ENCODE measurements at regions of chr6 and their contacts with region 1.

Region 1: GRCh38 chr6:49531774-49532569 is 18.5 kb upstream of the C6orf141 start:
- DNase-seq: peak; percentile 72
- H3K4me3 Mint-ChIP-seq: peak overlapping the region; percentile 31
- H3K27ac Mint-ChIP-seq: no peak overlapping the region
- H3K4me1 Mint-ChIP-seq: peaks cover 6% of the 10 kb centered on the region
- H3K27me3 Mint-ChIP-seq: no peaks in the 10 kb centered on the region
- CTCF ChIP-seq: peak; percentile 90

Region 2: DNA sequence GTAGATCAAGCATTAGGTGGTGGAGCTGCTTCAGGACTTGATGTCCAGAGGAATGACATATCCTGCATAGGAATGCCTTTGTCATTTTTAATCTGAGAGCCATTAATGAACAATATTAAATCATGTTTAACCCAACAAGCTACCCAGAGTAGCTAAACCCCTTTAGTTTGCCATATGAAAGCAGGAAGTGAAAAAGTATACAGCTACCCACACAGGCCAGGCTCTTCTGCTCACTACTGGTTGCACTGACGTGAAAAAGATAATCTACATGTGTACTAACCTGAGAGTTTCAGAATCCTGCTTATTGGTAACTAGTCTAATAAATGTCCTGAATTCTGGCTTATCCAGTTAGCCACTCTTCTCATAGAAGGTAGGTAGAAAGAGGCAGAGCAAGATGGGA is 12.3 kb before region 1 on chr6:
- CTCF ChIA-PET with region 1: interaction called, 18 read pairs
- POLR2A ChIA-PET with region 1: no interaction called
- intact Hi-C with region 1: no loop called
- DNase-seq: no peak
- H3K4me3 Mint-ChIP-seq: no peak overlapping the region
- H3K27ac Mint-ChIP-seq: no peak overlapping the region
- H3K4me1 Mint-ChIP-seq: no peaks in the 10 kb centered on the region
- H3K27me3 Mint-ChIP-seq: no peaks in the 10 kb centered on the region
- CTCF ChIP-seq: no peak

Region 3: DNA sequence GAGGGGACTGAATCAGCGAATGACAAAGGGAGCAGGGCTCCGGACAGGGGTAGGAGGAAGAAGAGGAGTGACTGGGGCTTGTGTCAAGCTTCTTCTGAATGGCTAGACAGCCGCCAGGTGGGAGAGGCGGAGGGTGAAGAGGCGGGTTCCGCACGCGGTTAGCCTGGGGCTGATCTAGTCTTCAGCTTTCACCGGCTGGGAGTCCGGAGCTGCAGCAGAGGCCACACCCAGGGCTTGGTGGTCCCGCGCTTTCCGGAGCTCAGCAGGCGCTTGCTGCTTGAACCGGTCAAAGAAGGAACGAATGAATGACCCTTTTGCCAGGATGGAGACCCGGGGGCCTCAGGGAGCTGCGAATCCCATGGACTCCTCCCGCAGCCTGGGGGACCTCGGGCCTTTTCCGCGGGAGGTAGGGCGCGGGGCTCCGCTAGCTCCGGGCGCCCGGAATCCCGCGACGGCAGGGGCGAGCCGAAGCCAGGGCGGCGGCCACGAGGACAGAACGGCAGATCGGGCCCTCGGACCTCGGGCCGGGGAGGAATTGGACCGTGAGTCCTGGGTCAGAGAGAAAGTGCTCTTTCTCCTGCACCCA is 18.6 kb after region 1 on chr6 and contains the start of gene C6orf141:
- CTCF ChIA-PET with region 1: interaction called, 34 read pairs
- POLR2A ChIA-PET with region 1: interaction called, 23 read pairs
- intact Hi-C with region 1: loop called (anchors 2 kb)
- DNase-seq: peak; percentile 82
- H3K4me3 Mint-ChIP-seq: peak within 1 kb of the TSS; percentile 90
- H3K27ac Mint-ChIP-seq: peak within 1 kb of the TSS; percentile 77
- H3K4me1 Mint-ChIP-seq: peaks cover 25% of the 10 kb centered on the region
- H3K27me3 Mint-ChIP-seq: no peaks in the 10 kb centered on the region
- CTCF ChIP-seq: no peak
- total RNA-seq, gene C6orf141: 29.9 and 37.0 TPM in 2 replicates

Region 4: DNA sequence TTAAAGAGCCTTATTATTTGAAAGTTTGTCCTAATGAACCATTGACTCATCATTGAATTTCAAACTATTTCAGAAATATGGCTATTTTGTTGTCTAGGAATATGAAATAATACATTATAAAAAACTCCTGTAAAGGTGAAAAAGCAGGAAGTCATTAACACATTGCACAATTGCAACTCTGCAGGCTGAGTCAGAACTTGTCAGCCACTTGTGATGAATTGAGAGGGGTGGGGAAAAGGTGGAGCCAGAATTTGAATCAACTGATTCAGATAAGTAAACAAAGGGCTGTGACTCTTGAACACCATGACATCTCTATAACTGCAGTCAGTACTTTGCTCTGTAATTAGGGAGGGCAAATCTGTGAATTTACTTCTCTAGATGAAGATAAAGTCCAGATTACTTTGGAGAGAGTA is 24.5 kb after region 1 on chr6:
- CTCF ChIA-PET with region 1: interaction called, 76 read pairs
- POLR2A ChIA-PET with region 1: interaction called, 23 read pairs
- intact Hi-C with region 1: loop called (anchors 2 kb)
- DNase-seq: peak; percentile 95
- H3K4me3 Mint-ChIP-seq: peak overlapping the region; percentile 8
- H3K27ac Mint-ChIP-seq: peak overlapping the region; percentile 66
- H3K4me1 Mint-ChIP-seq: peaks cover 36% of the 10 kb centered on the region
- H3K27me3 Mint-ChIP-seq: no peaks in the 10 kb centered on the region
- CTCF ChIP-seq: no peak

Region 5: DNA sequence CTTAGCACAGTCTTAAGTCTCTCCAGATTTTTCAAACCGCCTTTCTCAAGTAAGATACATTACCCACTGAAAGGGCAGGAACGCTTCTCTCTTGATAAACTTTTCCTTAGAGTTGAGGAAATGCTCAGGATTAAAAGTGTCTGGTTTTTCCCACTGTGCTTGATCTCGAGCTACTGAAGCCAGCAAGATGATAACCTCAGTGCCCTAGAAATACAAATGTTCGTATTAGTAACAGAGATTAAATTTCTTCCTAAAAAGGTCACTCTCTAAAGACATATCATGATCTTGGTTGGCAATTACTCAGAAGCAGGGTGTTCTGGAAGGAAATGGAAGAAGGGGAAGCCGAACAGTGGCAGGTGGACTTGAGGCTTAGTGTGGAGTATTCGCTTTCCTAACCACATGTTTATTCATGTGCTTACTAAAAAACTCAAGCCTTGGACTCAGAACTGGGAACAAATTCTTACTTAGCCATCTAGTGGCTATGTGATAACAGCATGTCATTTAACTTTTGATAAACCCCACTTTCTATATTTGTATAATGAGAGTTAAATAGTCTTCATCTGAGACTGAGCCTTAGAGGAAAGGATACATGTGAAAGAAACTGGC is 38.6 kb after region 1 on chr6:
- CTCF ChIA-PET with region 1: interaction called, 76 read pairs
- POLR2A ChIA-PET with region 1: interaction called, 4 read pairs
- intact Hi-C with region 1: loop called (anchors 2 kb)
- DNase-seq: peak; percentile 30
- H3K4me3 Mint-ChIP-seq: no peak overlapping the region
- H3K27ac Mint-ChIP-seq: no peak overlapping the region
- H3K4me1 Mint-ChIP-seq: peaks cover 10% of the 10 kb centered on the region
- H3K27me3 Mint-ChIP-seq: no peaks in the 10 kb centered on the region
- CTCF ChIP-seq: peak; percentile 15

Region 6: DNA sequence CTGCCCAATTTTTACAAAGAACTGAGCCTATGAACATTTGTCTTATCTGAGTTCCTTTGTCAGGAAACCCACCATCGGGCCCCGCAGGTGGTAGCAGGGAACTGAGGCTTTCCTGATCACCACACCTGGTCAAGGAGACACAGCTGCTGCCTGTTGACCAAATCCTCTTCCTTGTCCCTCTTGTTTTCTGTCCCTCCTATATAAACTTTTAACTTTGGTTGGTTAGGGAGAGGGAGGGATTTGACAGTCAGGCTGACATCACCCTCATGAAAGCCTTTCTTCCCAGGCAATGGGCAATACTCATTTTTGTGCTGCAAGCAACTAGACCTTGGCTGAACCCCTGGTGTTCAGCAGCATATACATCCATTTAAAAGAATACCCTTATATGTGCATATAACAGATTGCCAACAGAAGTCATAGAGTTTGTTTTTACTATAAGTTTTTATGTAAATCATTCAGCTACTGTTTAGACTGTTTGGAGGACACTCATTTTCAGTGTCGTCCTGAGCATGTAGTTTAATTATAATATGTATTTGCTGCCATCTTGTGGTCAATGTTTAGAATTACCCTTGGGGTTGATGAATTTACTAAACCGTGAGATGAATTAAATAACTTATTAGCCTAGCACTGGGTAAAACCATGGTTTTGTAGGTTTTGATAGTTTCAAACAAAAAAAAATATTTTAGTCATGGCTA is 317.4 kb after region 1 on chr6:
- CTCF ChIA-PET with region 1: interaction called, 6 read pairs
- POLR2A ChIA-PET with region 1: no interaction called
- intact Hi-C with region 1: loop called (anchors 1 kb)
- DNase-seq: peak; percentile 55
- H3K4me3 Mint-ChIP-seq: no peak overlapping the region
- H3K27ac Mint-ChIP-seq: no peak overlapping the region
- H3K4me1 Mint-ChIP-seq: no peaks in the 10 kb centered on the region
- H3K27me3 Mint-ChIP-seq: peaks cover 35% of the 10 kb centered on the region
- CTCF ChIP-seq: peak; percentile 54